Caco-2 (cell line): ENCODE measurements at regions of chr17 and their contacts with region 1.

Region 1: DNA sequence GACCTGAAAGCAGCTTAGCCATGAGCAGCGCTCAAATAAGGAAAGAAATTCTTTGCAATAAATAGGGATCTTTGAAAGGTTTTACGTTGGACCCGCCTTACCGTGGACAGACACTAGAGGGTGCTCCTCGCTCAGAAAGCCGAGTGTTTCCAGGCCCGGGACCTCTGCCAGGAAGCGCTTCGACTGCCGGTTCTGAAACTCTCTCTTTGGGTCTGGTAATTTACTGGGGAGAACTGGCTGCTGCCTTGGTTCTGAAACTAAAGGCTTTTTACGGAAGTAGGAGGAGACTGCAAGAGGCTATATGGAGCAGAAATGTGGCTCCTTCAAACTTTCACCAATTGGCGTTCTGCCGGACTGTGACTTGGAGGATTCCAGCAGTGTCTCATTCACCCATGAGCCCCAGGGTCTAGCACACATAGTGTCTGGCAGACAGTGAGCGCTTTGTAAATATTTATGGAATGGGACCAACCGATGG is 45.6 kb upstream of the HOXB9 start:
- DNase-seq: peak; percentile 86 to 94
- H3K4me3 ChIP-seq: peak overlapping the region; percentile 23
- H3K4me3 Mint-ChIP-seq: peak overlapping the region; percentile 58
- H3K27ac Mint-ChIP-seq: peak overlapping the region; percentile 11
- H3K4me1 ChIP-seq: no peaks in the 10 kb centered on the region
- H3K4me1 Mint-ChIP-seq: peaks cover 5% of the 10 kb centered on the region
- H3K27me3 ChIP-seq: no peaks in the 10 kb centered on the region
- H3K27me3 Mint-ChIP-seq: peaks cover 2% of the 10 kb centered on the region
- CTCF ChIP-seq: peak; percentile 99

Region 2: DNA sequence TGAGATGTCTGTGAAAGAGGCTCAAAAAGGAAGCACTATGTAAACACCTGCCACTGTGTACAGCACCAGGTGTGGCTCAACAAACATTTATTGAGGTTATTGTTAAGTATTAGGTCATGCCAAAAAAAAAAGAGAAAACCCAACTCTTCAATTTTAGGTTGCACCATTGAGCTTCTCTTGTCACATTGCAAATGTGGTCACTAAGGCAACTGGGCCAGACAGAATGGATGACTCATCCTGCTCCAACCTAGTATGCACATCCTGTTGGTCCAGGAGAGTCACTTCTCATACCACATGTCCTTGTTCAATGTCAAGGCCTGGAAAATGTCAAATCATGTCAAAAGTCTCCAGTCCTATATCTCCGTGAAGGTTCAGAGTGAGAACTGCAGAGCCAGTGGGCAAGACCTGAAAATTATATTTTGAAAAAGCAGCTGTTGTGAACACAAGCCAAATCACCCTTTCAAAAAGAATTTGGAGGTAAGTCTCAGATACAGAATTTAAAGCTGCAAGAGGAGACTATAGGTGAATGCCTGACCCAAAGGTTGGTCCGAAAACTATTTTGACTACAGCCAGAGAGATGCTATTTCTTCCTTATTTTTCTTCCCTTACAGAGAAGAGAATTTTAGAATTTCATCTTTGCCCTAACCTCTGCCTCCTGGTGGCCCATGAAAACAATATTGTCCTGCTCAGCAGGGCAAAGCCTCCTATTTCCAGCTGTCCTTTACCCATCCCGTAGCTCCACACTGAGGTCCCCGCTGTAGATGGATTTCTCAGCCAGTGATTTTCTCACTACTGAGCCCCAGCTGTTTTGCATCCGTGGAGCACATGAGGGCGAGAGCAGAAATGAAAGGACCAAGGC is 165.7 kb before region 1 on chr17:
- CTCF ChIA-PET with region 1: no interaction called
- POLR2A ChIA-PET with region 1: no interaction called
- intact Hi-C with region 1: no loop called
- DNase-seq: peak in 1 of 2 experiments; percentile 53
- H3K4me3 ChIP-seq: no peak overlapping the region
- H3K4me3 Mint-ChIP-seq: no peak overlapping the region
- H3K27ac Mint-ChIP-seq: no peak overlapping the region
- H3K4me1 ChIP-seq: peaks cover 5% of the 10 kb centered on the region
- H3K4me1 Mint-ChIP-seq: peaks cover 16% of the 10 kb centered on the region
- H3K27me3 ChIP-seq: no peaks in the 10 kb centered on the region
- H3K27me3 Mint-ChIP-seq: peaks cover 20% of the 10 kb centered on the region
- CTCF ChIP-seq: peak; percentile 11 to 29

Region 3: DNA sequence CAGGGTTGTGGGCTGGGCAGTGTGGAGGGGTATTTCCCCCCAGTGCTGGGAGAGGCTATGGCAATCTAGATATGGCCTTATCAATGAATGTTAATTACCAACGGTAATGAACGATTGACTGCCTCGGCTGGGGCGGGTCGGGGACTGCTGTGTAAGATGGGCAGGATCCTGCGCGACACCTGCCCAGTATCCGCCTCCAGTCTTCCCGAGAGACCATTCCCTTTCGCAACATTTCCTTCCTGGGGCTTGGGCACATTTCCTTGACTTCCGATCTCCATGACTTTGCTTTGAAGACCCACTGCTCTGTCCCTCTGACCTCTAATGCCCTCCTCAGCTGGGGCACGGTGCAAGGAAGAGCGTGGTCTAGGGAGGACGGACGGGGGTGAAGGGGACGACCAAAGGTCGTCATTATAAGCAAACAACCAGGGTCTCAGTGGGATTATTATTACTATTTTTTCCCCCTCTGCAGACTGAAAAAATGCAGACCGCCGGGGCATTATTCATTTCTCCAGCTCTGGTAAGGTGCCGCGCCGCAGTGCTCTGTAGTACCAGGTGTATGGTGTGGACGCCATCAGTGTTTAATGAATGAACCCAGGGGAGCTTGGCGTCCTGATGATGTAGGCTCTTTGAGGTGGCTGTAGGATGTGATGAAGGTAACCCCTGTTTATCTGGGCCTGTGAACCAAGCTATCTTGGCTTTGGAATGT is 221.4 kb after region 1 on chr17:
- CTCF ChIA-PET with region 1: interaction called, 14 read pairs
- POLR2A ChIA-PET with region 1: no interaction called
- intact Hi-C with region 1: no loop called
- DNase-seq: no peak
- H3K4me3 ChIP-seq: peak overlapping the region; percentile 73
- H3K4me3 Mint-ChIP-seq: peak overlapping the region; percentile 84
- H3K27ac Mint-ChIP-seq: peak overlapping the region; percentile 90
- H3K4me1 ChIP-seq: peaks cover 13% of the 10 kb centered on the region
- H3K4me1 Mint-ChIP-seq: peaks cover 12% of the 10 kb centered on the region
- H3K27me3 ChIP-seq: no peaks in the 10 kb centered on the region
- H3K27me3 Mint-ChIP-seq: peaks cover 2% of the 10 kb centered on the region
- CTCF ChIP-seq: no peak